ENCODE measurements at regions of chr15 and their contacts with region 1.

Region 1: DNA sequence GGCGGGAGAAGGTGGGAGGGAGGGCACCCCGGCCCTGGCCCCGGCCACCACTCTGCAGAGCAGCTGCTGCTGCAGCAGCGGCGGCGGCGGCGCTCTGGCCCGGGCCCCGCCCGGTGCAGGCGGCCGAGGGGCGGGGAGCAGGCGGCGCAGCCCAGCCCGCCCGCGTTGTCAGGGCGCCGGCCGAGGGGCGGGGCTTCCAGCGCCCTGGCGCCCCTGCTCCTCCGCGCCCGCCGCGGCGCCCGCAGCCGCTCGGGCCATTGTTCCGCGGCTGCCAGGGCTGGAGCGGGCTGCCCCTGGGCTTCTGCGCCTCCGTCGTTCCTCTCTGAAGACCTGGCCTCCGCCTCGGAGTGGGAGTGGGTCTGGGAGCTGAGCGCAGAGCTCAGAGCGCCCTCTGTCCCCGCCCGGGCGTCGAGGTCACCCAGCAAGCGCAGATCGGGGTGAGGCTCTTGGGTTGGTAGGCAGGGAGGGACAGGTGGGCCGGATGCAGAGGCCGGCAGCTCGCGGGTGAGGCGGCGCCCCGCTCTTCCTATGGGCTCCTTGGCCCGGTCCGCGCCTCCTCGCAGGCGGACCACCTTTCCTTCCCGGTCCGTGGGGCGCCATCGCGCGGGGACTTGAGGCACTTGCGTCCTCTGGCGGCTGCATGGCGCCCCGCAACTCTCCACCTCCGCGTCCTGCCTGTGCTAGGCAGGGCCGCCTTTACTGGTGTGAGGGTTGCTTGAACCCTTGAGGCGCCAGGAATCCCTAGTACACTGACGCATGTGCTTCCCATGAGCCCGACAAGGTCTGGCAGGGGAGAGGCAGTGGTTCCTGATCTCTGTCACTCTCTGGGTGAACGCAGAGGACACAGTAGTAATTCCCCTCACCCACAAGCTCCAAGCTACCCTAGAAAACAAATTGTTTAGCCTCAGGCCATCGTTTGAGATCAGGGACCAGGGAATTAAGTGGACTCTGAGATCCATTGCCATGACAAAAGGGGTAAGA is at the start of gene LPCAT4:
- DNase-seq: peak; percentile 89 to 93 (median 92)
- H3K4me3 ChIP-seq: peak within 1 kb of the TSS; percentile 86 to 94
- H3K4me3 Mint-ChIP-seq: peak within 1 kb of the TSS; percentile 94 to 99 (median 97)
- H3K27ac ChIP-seq: peak within 1 kb of the TSS; percentile 87
- H3K27ac Mint-ChIP-seq: peak within 1 kb of the TSS; percentile 94 to 97 (median 96)
- H3K4me1 ChIP-seq: peaks cover 31% of the 10 kb centered on the region
- H3K4me1 Mint-ChIP-seq: peaks cover 27 to 57% (median 38%) of the 10 kb centered on the region in 4 donors
- H3K27me3 ChIP-seq: no peaks in the 10 kb centered on the region
- H3K27me3 Mint-ChIP-seq: no peaks in the 10 kb centered on the region
- total RNA-seq, gene LPCAT4: 100 to 108 TPM

Region 2: DNA sequence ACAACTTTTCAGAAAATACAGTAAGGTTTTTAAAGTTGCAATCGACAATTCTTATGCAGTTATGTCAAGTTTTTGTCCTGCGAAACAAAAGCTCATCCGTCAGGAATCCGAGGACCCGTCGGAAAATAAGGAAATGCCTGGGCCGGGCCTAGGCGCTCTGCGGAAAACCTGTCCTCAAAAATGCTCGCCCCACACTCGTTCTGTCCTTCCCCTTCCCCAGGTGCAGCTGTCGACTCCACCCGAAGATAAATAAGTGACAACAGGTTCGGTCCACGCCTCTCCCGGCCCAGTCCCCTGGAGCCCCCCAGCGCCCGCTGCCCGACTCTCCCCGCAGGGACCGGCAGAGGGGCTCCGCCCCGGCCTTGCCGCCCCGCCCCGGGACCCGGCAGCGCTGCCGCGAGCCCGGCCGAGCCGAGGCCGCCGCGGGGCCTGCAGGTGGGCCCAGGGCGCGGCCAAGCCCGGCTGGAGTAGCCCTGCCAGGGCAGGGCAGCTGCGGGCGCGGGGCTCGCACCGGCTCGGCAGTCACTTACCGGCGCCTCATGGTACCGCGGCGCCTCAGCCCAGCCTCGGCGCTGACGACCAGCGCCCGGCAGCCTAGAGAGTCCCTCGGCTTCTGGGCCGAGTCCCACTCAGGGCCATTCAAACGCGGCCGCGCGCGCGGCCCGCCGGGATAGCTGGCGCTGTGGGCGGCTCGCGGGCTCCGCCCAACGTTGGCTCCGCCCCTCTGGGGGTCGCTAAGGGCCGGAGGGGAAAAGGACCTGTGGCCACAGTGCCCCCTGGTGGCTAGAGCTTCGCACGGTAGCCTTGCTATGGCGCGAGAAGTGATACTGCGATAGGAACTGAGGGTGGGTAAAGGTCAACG is 157.7 kb before region 1 on chr15 and contains the start of gene KATNBL1:
- CTCF ChIA-PET with region 1: interaction called, 13 read pairs
- POLR2A ChIA-PET with region 1: interaction called, 16 read pairs
- intact Hi-C with region 1: loop called (anchors 1 kb)
- DNase-seq: peak; percentile 89 to 92 (median 89)
- H3K4me3 ChIP-seq: peak within 1 kb of the TSS; percentile 37 to 72
- H3K4me3 Mint-ChIP-seq: peak within 1 kb of the TSS; percentile 88 to 95 (median 92)
- H3K27ac ChIP-seq: peak within 1 kb of the TSS; percentile 66
- H3K27ac Mint-ChIP-seq: peak within 1 kb of the TSS; percentile 61 to 93 (median 91)
- H3K4me1 ChIP-seq: peaks cover 13% of the 10 kb centered on the region
- H3K4me1 Mint-ChIP-seq: peaks cover 15 to 29% (median 21%) of the 10 kb centered on the region in 4 donors
- H3K27me3 ChIP-seq: no peaks in the 10 kb centered on the region
- H3K27me3 Mint-ChIP-seq: peaks cover 0 to 4% of the 10 kb centered on the region in 2 donors
- total RNA-seq, gene KATNBL1: 34.7 to 37.9 TPM

Region 3: DNA sequence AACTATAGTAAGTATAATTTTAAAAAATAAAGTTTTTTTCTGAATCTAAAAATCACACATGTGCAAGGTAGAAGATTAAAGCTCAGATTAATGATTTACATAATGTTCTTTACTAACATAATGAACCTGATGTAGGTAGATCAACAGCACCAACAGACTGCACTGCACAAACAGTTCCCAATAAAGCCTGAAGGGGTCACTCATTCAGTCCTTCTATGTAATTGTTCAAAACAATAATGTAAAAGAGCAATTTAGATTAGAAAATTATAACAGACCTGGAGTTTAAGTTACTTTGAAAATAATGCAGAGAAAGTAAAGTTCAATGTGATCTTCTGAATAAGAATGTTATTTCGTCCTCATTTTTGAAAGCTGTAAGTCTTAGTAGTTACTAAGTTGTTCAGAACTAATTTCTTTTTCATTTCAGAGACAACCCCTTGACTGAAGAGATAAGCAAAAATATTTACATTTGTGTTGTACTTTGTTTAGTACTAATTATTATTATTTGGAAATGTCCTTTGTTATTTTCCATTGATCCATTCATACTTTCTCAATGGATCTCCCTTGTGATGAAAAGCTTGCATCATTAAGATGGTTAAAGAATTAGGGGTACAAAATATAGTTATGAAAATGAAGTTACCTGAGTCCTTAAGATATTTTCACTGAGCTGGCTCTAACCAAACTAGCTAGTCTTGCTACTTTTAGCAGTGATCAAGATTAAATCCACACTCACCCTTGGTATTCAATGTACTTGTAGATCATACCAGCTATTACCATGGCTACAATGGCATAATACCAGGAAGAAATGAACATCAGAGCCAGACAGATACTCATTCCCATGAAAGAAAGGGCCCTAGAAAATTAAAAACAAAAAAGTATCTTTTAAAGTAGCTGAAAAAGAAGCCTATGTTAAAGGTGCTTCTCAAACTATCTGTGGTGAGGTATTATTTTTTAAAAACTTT is 125.7 kb before region 1 on chr15:
- CTCF ChIA-PET with region 1: interaction called, 84 read pairs
- POLR2A ChIA-PET with region 1: interaction called, 23 read pairs
- intact Hi-C with region 1: loop called (anchors 1 kb)
- DNase-seq: peak; percentile 42 to 56 (median 55)
- H3K4me3 ChIP-seq: no peak overlapping the region
- H3K4me3 Mint-ChIP-seq: no peak overlapping the region
- H3K27ac ChIP-seq: no peak overlapping the region
- H3K27ac Mint-ChIP-seq: peak overlapping the region in 4 of 7 donors; percentile 4 to 53 (median 46)
- H3K4me1 ChIP-seq: no peaks in the 10 kb centered on the region
- H3K4me1 Mint-ChIP-seq: no peaks in the 10 kb centered on the region
- H3K27me3 ChIP-seq: no peaks in the 10 kb centered on the region
- H3K27me3 Mint-ChIP-seq: no peaks in the 10 kb centered on the region

Region 4: GRCh38 chr15:34331809-34332208 is 35.6 kb before region 1 on chr15:
- CTCF ChIA-PET with region 1: interaction called, 35 read pairs
- POLR2A ChIA-PET with region 1: interaction called, 144 read pairs
- intact Hi-C with region 1: loop called (anchors 1 kb)
- DNase-seq: peak in 2 of 5 donors; percentile 16 to 33
- H3K4me3 ChIP-seq: no peak overlapping the region
- H3K4me3 Mint-ChIP-seq: peak overlapping the region; percentile 7 to 67 (median 30)
- H3K27ac ChIP-seq: no peak overlapping the region
- H3K27ac Mint-ChIP-seq: peak overlapping the region; percentile 31 to 87 (median 80)
- H3K4me1 ChIP-seq: peaks cover 95% of the 10 kb centered on the region
- H3K4me1 Mint-ChIP-seq: peaks cover 50 to 83% (median 63%) of the 10 kb centered on the region in 4 donors
- H3K27me3 ChIP-seq: no peaks in the 10 kb centered on the region
- H3K27me3 Mint-ChIP-seq: no peaks in the 10 kb centered on the region

Region 5: DNA sequence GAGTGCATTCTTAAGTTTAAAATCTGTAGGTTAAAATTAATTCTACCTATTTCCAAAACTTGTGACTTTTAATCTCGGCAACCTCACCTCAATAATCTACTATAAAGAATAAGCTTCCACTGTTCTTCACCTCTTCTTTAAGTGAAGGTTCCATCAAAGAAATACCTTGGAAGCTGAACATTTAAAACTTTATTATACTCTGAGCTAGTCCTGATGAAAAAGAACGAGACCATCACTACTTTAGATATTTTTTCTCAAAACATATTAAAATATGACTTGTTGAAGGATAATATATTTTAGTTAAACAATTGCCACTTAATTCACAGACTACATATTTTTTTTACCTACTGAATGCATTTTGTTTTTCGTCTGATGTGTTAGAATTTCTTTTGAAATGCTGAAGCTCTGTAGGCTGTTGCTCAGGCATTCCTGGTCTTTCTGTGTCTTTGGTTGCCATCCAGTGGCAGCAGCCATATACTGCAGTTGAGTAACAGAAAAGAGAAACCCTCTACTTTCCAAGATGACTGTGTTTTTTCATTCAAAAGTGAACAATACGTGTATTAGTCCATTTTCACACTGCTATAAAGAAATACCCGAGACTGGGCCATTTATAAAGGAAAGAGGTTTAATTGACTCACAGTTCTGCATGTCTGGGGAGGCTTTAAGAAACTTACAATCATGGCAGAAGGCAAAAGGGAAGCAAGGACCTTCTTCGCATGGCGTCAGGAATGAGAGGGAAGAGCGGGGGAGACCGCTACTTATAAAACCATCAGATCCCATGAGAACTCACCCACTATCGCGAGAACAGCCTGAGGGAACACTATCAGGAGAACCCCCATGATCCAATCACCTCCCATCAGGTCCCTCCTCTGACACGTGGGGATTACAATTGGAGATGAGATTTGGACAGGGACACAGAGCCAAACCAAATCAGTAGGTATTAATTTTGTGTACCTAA is 220.6 kb after region 1 on chr15:
- CTCF ChIA-PET with region 1: interaction called, 11 read pairs
- POLR2A ChIA-PET with region 1: interaction called, 32 read pairs
- intact Hi-C with region 1: loop called (anchors 1 kb)
- DNase-seq: peak; percentile 67 to 72 (median 68)
- H3K4me3 ChIP-seq: no peak overlapping the region
- H3K4me3 Mint-ChIP-seq: peak overlapping the region; percentile 42 to 82 (median 71)
- H3K27ac ChIP-seq: no peak overlapping the region
- H3K27ac Mint-ChIP-seq: peak overlapping the region in 4 of 7 donors; percentile 1 to 82 (median 64)
- H3K4me1 ChIP-seq: peaks cover 11% of the 10 kb centered on the region
- H3K4me1 Mint-ChIP-seq: peaks cover 4 to 6% (median 5%) of the 10 kb centered on the region in 4 donors
- H3K27me3 ChIP-seq: no peaks in the 10 kb centered on the region
- H3K27me3 Mint-ChIP-seq: peaks cover 0 to 5% of the 10 kb centered on the region in 2 donors

Measured in CD4-positive, alpha-beta memory T cell (primary cell).